ENCODE measurements at regions of chrX and their contacts with region 1.

Region 1: GRCh38 chrX:41100200-41100599 is 15.0 kb downstream of the USP9X start:
- DNase-seq: no peak
- H3K4me3 ChIP-seq: no peak overlapping the region
- H3K27ac ChIP-seq: no peak overlapping the region
- H3K4me1 ChIP-seq: peaks cover 0 to 45% (median 14%) of the 10 kb centered on the region in 4 donors
- H3K27me3 ChIP-seq: no peaks in the 10 kb centered on the region
- CTCF ChIP-seq: no peak
- EP300 ChIP-seq: no peak
- POLR2A ChIP-seq: no peak

Region 2: DNA sequence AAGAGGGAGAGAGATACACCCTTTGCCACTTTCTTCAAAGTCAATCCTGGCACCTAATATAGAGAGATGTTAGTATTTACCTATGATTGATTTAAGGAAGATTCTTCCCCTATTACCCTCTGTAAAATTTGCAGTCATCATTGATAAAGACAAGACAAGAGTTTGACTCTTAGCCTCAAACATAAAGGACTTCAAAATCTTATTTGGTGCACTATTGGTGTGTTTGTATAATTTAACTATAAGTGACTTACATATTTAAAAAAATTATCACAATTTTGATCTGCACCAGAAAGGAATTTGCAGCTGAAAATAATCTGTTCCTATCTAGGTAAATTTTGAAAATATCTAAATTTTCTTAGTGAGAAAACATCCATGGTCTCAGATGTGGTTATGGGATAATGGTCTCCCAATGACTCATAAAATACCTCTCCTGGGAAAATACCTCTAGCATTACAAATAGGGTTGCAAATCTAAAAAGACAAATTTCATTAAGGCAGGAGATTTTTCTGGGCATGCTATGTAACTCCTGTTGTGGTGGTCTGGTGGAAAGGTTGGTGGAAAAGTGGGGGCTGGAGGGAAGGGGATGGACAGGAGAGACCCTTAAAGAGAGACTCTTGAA is 191.2 kb before region 1 on chrX:
- intact Hi-C with region 1: no loop called
- DNase-seq: no peak
- H3K4me3 ChIP-seq: no peak overlapping the region
- H3K27ac ChIP-seq: no peak overlapping the region
- H3K4me1 ChIP-seq: no peaks in the 10 kb centered on the region
- H3K27me3 ChIP-seq: no peaks in the 10 kb centered on the region
- CTCF ChIP-seq: no peak
- EP300 ChIP-seq: no peak
- POLR2A ChIP-seq: no peak

Region 3: DNA sequence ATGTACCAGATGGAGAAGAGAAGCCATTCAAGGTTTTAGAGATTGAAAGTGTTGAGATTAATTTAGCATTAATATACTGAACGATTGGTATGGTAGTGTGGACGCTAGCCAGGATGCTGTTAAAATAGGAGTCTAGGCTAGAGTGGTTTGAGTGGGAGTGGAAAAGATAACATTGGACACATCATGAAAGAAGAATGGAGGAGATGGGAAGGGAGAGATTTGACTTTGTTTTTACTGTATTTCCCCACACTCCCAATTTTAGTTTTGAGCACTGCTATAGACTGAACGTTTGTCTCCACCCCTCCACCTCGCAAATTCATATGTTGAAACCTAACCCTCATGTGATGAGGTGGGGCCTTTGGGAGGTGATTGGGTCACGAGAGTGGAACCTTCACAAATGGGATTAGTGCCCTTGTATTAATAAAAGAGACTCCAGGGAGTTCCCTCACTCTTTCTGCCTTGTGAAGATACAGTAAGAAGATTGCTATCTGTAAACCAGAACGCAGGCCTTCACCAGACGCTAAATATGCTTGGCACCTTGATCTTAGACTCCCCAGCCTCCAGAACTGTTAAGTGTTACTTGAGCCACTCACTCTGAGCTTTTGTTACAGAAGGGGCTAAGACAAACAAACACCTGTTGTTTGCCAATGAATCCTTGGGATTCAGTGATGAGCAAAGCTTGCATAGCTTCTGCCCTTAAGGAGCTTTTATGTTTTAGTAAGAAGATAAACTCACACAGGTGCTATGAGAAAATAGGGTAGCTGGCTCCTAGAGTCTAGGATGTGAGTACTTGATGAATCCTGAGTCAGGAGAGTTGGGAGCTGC is 10.8 kb after region 1 on chrX:
- intact Hi-C with region 1: loop called (anchors 1 kb)
- DNase-seq: no peak
- H3K4me3 ChIP-seq: no peak overlapping the region
- H3K27ac ChIP-seq: no peak overlapping the region
- H3K4me1 ChIP-seq: peaks cover 0 to 55% (median 26%) of the 10 kb centered on the region in 4 donors
- H3K27me3 ChIP-seq: no peaks in the 10 kb centered on the region
- CTCF ChIP-seq: no peak
- EP300 ChIP-seq: no peak
- POLR2A ChIP-seq: no peak